OCI-LY7 (cell line): ENCODE measurements at regions of chr6 and their contacts with region 1.

Region 1: DNA sequence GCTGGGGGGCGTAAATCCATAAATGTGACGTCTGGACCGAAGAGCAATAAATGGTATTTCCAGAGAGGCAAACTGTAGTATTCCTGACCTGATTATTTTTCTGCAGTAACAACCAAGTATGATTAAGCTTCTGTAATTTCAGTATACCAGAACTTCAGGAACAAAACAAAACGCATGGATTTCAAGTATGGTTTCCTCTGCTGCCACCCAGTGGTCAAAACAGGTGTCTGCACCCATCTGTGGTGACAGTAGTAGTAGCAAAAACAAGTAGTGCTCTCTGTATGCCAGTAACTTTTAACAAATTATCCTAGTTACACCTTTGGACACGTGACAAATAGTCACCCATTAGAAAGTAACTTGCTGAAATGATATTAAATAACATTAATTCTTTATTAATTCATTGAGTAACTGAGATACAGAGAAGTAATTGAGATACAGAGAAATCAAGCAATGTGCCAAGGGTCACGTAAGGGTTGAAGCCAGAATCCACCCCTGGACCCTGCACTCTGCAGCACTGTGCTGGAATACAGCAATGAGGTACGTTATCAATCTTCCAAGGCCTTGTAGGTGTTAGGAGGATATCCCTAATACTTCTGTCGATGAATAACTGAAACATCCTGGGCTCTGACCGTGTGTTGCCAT is 7.9 kb downstream of the CALHM4 start:
- DNase-seq: peak; percentile 67
- H3K4me3 ChIP-seq: no peak overlapping the region
- H3K27ac ChIP-seq: no peak overlapping the region
- H3K4me1 ChIP-seq: no peaks in the 10 kb centered on the region
- CTCF ChIP-seq: peak; percentile 99

Region 2: DNA sequence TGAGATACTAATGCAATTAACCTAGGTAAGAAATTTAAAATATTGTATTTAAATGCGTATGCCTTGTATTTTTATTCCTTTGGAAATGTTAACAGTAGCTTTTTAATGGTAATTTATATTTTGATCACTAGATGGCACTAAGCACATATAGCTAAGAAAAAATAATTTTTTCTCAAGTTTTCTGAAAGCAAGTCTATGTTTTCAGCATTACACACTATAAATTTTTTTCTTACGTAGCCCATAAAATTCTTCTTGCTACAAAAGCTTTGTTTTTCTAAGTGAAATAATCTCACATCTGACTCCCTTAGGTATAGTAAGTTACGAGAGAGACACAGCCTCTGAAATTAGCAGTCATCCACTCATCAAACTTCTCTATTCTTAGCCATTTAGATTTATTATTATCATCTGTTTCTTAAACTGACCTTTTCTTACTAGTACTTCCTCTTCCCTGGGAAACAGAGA is 343.3 kb before region 1 on chr6:
- CTCF ChIA-PET with region 1: no interaction called
- POLR2A ChIA-PET with region 1: no interaction called
- intact Hi-C with region 1: loop called (anchors 2 kb)
- DNase-seq: peak; percentile 33
- H3K4me3 ChIP-seq: no peak overlapping the region
- H3K27ac ChIP-seq: no peak overlapping the region
- H3K4me1 ChIP-seq: no peaks in the 10 kb centered on the region
- CTCF ChIP-seq: peak; percentile 89

Region 3: GRCh38 chr6:116287689-116288282 is 273.7 kb before region 1 on chr6:
- CTCF ChIA-PET with region 1: no interaction called
- POLR2A ChIA-PET with region 1: no interaction called
- intact Hi-C with region 1: loop called (anchors 1 kb)
- DNase-seq: peak; percentile 65
- H3K4me3 ChIP-seq: no peak overlapping the region
- H3K27ac ChIP-seq: no peak overlapping the region
- H3K4me1 ChIP-seq: peaks cover 5% of the 10 kb centered on the region
- CTCF ChIP-seq: peak; percentile 92

Region 4: DNA sequence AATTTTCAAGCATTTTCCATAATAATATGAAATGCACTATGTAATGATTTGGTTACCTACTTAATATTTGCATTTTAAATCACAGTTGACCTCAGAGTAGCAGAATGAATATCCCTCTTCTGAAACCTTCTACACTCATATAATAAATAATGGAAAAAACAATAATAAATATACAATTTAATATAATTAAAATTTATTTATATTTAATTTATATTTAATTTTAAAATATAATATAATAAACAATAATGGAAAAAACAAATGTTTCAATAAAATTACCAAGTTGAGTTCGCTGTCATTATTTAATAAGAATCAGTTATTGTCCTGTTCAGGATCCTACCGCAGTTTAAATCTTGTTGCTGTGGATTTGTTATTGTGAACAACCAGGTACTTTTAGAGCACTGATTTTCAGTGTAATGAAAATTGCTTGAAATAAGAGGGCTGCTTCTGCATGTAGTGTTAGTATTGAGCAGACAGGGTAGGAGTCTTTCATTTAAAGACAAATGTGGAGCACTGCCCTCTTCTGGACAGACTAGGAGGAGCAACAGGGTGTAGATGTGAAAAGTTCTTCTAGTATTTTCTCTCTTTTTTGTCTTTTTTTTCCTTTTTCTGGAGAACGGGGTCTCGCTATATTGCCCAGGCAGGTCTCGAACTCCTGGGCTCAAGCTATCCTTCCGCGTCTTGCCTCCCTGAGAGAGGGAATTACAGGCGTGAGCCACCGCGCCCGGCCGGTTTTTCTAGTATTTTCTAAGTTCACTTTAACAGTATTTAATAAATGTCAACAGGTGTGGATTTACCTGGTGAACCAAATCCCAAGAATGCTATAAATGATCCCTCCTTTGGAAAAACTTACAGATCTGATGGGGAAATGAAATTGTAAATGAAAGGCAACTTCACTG is 29.6 kb before region 1 on chr6:
- CTCF ChIA-PET with region 1: no interaction called
- POLR2A ChIA-PET with region 1: no interaction called
- intact Hi-C with region 1: loop called (anchors 2 kb)
- DNase-seq: peak; percentile 69
- H3K4me3 ChIP-seq: no peak overlapping the region
- H3K27ac ChIP-seq: no peak overlapping the region
- H3K4me1 ChIP-seq: no peaks in the 10 kb centered on the region
- CTCF ChIP-seq: peak; percentile 91

Region 5: DNA sequence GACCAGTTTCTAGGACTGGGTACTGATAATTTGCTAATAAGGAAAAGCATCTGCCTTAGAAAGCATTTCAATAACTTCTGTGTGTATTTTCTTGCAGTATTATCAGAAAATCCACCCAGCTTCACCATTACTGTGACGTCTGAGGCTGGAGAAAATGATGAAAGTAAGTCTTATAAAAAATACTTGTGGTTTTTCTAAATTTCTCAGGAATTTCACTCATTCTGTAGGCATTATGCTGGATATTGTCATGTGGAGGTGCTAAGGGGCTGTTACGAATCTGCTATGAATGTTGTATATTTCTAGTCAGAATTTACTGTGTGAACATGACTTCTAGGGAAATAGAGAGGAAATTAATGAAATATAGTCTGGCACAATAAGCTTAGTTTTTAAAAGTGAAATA is 18.7 kb after region 1 on chr6:
- CTCF ChIA-PET with region 1: no interaction called
- POLR2A ChIA-PET with region 1: no interaction called
- intact Hi-C with region 1: no loop called
- DNase-seq: no peak
- H3K4me3 ChIP-seq: no peak overlapping the region
- H3K27ac ChIP-seq: no peak overlapping the region
- H3K4me1 ChIP-seq: no peaks in the 10 kb centered on the region
- CTCF ChIP-seq: no peak